Endothelial cell of umbilical vein (primary cell): ENCODE measurements at regions of chr9 and their contacts with region 1.

Region 1: GRCh38 chr9:121883281-121884056 is 209.6 kb downstream of the TTLL11 start:
- DNase-seq: peak; percentile 34
- H3K4me3 ChIP-seq: no peak overlapping the region
- H3K27ac ChIP-seq: peak overlapping the region; percentile 6
- H3K4me1 ChIP-seq: peaks cover 14% of the 10 kb centered on the region
- H3K27me3 ChIP-seq: no peaks in the 10 kb centered on the region
- CTCF ChIP-seq: no peak
- POLR2A ChIP-seq: no peak

Region 2: GRCh38 chr9:121839726-121840500 is 43.6 kb before region 1 on chr9:
- CTCF ChIA-PET with region 1: interaction called, 3 read pairs
- POLR2A ChIA-PET with region 1: no interaction called
- dilution Hi-C with region 1: no loop called
- intact Hi-C with region 1: loop called (anchors 1 kb)
- DNase-seq: no peak
- H3K4me3 ChIP-seq: no peak overlapping the region
- H3K27ac ChIP-seq: no peak overlapping the region
- H3K4me1 ChIP-seq: peaks cover 15% of the 10 kb centered on the region
- H3K27me3 ChIP-seq: no peaks in the 10 kb centered on the region
- CTCF ChIP-seq: no peak
- POLR2A ChIP-seq: no peak

Region 3: GRCh38 chr9:122394265-122395125 is 511.0 kb after region 1 on chr9:
- CTCF ChIA-PET with region 1: no interaction called
- POLR2A ChIA-PET with region 1: no interaction called
- dilution Hi-C with region 1: no loop called
- intact Hi-C with region 1: no loop called
- DNase-seq: peak; percentile 38
- H3K4me3 ChIP-seq: no peak overlapping the region
- H3K27ac ChIP-seq: peak overlapping the region; percentile 33
- H3K4me1 ChIP-seq: peaks cover 27% of the 10 kb centered on the region
- H3K27me3 ChIP-seq: no peaks in the 10 kb centered on the region
- CTCF ChIP-seq: no peak
- POLR2A ChIP-seq: no peak